Left ventricle myocardium inferior (tissue), 1 donor: ENCODE measurements at regions of chr15 and their contacts with region 1.

Region 1: GRCh38 chr15:40044717-40045571 is 6.0 kb upstream of the SRP14 start:
- DNase-seq: peak; percentile 89
- H3K4me3 ChIP-seq: peak overlapping the region; percentile 26
- H3K27ac ChIP-seq: peak overlapping the region; percentile 42
- H3K4me1 ChIP-seq: peaks cover 67% of the 10 kb centered on the region
- H3K27me3 ChIP-seq: no peaks in the 10 kb centered on the region
- CTCF ChIP-seq: peak; percentile 96

Region 2: DNA sequence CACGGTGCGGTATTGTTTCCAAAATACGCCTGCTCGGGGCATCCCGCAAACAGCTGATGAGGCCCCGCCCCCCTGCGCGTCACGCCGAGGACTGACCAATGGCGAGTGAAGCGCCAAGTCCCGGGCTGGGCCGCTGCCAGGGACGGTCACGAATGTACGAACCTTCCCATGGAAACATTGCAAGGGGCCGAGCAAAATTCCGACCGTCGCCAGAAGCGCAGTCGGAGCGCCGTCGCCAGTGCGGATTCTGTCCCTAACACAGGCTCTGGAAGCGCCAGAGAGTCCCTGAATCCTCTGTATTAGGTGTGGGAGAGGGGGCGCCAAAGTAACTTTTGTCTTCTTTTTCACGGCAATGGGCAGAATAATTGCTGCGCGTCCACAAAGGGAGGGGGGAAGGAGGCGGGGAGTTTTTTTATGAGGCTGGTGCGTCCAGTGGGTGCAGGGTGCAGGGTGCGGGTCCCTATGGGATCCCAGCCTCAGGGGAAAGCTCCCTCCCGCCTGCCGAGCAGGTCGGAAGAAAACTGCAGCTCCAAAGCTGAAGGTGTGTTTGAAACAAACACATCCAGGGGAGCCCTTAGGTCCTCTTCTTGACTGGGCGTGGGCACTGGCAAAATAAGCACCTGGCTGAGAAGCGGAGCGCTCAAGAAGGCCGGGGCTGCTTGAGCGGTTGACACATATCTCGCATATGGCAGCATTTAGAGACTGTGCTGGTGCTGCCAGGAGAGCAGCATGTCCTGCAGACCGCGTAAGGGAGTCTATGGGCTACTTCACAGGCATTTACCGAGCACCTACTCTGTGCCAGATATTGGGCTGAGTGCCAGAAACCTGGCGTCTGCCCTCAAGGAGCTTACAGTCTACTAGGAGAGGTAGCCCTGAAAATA is 64.2 kb after region 1 on chr15 and contains the start of gene BMF:
- intact Hi-C with region 1: loop called (anchors 10 kb)
- DNase-seq: peak; percentile 100
- H3K4me3 ChIP-seq: peak within 1 kb of the TSS; percentile 89
- H3K27ac ChIP-seq: peak within 1 kb of the TSS; percentile 86
- H3K4me1 ChIP-seq: peaks cover 50% of the 10 kb centered on the region
- H3K27me3 ChIP-seq: peaks cover 13% of the 10 kb centered on the region
- CTCF ChIP-seq: peak; percentile 42
- total RNA-seq, gene BMF: 3.1 TPM

Region 3: GRCh38 chr15:40217159-40217824 is 172.3 kb after region 1 on chr15:
- intact Hi-C with region 1: loop called (anchors 10 kb)
- DNase-seq: no peak
- H3K4me3 ChIP-seq: no peak overlapping the region
- H3K27ac ChIP-seq: no peak overlapping the region
- H3K4me1 ChIP-seq: no peaks in the 10 kb centered on the region
- H3K27me3 ChIP-seq: no peaks in the 10 kb centered on the region
- CTCF ChIP-seq: peak; percentile 90

Region 4: DNA sequence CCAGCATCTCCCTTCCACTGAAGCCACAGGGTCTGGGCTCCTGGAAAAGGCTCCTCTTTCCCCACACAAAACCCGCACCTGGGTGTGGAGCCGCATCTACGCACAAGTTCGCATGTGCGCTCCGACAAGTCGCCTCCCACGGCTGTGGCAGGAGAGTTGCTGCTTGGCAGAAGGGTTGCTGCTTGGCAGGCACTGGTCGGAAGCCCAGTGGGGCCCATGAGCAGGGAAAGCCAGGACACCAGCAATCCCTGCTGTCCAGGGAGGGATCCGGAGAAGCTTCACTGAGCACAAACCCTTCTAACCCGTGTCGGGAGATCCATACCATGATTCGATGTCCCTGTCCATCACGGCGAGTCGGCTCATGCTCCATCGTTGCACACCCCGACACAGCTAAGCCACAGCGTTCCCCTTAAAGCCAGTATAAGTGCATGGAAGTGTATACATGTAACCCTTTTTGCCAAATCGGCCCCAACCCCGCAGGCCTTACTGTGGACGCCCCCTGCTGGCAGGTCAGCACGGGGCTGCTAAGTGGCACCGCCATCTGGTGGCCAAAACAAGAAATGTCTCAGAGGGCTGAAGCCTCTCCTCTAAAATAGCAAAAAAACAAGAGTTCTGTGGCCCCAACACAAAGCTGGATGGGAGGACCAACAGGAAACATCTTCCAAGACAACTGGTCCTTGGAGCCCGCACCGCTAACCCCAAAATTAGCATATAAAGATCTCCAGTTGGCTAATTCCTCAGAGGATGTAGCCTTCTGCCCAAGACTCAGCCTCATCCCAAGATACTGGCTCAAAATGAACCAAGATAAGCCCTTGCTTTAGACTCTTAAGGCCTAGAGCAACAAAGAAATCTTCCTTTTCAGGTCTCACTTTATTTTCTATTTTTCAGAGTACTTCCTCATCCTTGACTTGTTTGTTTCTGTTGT is 229.7 kb after region 1 on chr15:
- intact Hi-C with region 1: loop called (anchors 10 kb)
- DNase-seq: peak; percentile 71
- H3K4me3 ChIP-seq: no peak overlapping the region
- H3K27ac ChIP-seq: no peak overlapping the region
- H3K4me1 ChIP-seq: peaks cover 11% of the 10 kb centered on the region
- H3K27me3 ChIP-seq: peaks cover 36% of the 10 kb centered on the region
- CTCF ChIP-seq: peak; percentile 100

Region 5: DNA sequence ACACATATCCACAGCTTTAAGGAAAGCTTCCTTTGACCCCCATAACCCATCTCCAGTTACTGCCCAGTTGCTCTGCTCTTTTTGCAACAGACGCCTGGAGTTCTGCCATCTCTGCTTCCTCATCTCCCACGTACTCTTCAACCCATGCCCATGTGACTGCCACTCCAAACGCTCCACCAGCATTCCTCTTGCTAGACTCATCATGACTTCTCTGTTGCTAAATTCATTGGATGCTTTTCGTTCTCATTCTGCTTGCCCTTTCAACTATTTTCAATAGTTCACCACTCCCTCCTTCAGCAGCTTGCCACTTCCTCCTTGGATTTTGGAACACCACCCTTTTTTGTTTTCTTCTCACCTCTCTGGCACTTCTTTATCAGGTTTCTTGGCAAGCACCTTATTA is 334.9 kb after region 1 on chr15:
- intact Hi-C with region 1: no loop called
- DNase-seq: peak; percentile 35
- H3K4me3 ChIP-seq: no peak overlapping the region
- H3K27ac ChIP-seq: peak overlapping the region; percentile 69
- H3K4me1 ChIP-seq: peaks cover 35% of the 10 kb centered on the region
- H3K27me3 ChIP-seq: no peaks in the 10 kb centered on the region
- CTCF ChIP-seq: no peak